Caki2 (cell line): ENCODE measurements at regions of chr12 and their contacts with region 1.

Region 1: DNA sequence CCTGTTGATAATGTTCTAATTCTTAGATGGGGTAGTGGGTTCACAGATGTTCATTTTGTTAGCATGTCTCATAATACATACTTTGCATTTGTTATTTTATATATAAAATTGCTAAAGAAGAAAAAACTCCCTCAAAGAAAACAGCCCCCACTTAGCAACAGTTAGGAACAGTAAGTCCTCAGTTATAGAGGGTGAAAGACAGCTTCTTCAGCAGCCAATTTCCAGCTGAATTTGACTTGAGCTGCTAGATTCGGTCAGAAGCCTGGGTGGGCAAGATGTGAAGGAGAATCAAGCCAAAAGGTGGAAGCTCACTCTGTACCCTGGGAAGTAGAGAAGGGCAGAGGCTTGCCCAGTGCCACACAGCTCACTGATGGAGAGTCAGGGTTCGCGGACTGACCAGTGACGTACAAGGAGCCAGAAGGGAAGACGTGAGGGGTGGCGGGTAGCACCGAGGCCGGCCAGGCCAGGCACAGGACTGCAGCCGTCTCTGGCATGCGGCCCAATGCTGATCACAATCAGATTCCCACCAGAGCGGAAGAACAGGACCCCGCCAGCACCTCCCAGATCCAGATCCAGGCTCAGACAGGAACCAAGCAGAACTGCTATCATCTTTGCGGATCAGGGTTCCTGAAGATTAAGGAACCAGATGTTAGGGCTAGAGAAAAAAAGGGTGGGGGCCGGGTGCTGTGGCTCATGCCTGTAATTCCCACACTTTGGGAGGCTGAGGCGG is 30.4 kb upstream of the VWF start:
- DNase-seq: no peak

Region 2: DNA sequence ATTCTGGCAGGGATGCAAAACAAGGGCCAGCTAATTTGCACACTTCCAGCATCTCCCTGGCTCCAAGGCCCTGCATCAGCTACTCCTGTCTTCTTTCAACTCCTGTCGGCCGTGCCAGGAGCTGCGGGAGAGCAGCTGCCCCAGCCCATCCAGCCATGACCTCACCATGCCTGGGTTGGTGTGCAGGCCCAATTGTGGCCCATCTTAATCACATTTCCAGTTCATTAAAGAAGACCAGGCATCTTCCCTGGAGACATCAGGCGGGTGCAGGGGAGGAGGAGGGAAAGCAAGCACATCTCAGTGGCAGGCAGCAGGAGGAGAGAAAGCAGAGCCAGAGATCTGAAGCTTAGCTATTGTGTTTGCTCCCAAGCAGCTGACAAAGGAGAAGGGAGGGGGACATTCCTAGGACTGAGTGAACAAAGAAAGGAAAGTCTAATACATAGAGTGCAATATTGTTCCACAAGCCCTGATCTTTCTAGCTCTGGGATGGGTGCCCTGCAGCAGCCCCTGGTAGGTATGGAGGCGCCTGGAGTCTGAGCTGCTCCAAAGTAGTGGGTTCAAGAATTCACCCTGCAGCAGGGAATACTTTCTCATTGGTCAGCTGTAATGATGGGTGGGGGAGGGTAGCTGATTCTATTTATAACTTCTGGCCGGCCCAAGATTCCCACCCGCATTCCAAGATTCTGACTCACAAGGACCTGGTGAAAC is 70.5 kb before region 1 on chr12:
- in situ Hi-C with region 1: loop called (anchors 5 kb)
- DNase-seq: peak; percentile 64